ENCODE measurements at regions of chr2 and their contacts with region 1.

Region 1: DNA sequence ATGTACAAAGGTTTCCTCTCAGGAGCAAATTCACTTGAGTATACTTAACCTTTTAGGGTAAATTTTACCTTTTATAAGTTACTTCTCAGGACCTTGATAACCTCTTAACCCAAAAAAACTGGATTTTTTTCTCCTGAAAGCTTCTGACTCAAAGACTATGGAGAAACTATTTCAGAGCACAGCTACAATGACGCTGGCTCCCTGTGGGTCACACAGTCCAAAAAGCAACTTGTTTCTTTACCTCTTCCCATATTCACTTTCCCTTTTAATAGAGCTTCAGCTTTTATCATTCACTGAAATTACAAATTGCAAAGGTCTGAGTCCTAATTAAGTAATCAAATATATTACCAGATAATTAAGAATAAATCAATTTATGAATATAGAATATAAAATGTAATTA is 32.4 kb downstream of the GTF3C3 start:
- DNase-seq: no peak
- ATAC-seq: no peak
- H3K4me3 ChIP-seq: no peak overlapping the region
- H3K27ac ChIP-seq: no peak overlapping the region
- H3K4me1 ChIP-seq: no peaks in the 10 kb centered on the region
- H3K27me3 ChIP-seq: no peaks in the 10 kb centered on the region
- CTCF ChIP-seq: no peak
- POLR2A ChIP-seq: no peak
- RAD21 ChIP-seq: no peak

Region 2: GRCh38 chr2:196149948-196150347 is 617.2 kb before region 1 on chr2:
- CTCF ChIA-PET with region 1: no interaction called
- POLR2A ChIA-PET with region 1: no interaction called
- dilution Hi-C with region 1: no loop called
- in situ Hi-C with region 1: no loop called
- intact Hi-C with region 1: loop called (anchors 10 kb)
- DNase-seq: no peak
- ATAC-seq: no peak
- H3K4me3 ChIP-seq: no peak overlapping the region
- H3K27ac ChIP-seq: no peak overlapping the region
- H3K4me1 ChIP-seq: no peaks in the 10 kb centered on the region; the same call in 1 of the 2 replicates
- H3K27me3 ChIP-seq: no peaks in the 10 kb centered on the region
- CTCF ChIP-seq: no peak
- POLR2A ChIP-seq: no peak
- RAD21 ChIP-seq: no peak

Region 3: GRCh38 chr2:196468394-196468793 is 298.7 kb before region 1 on chr2:
- CTCF ChIA-PET with region 1: no interaction called
- POLR2A ChIA-PET with region 1: no interaction called
- dilution Hi-C with region 1: no loop called
- in situ Hi-C with region 1: no loop called
- intact Hi-C with region 1: loop called (anchors 10 kb)
- DNase-seq: no peak
- ATAC-seq: no peak
- H3K4me3 ChIP-seq: no peak overlapping the region
- H3K27ac ChIP-seq: no peak overlapping the region
- H3K4me1 ChIP-seq: no peaks in the 10 kb centered on the region
- H3K27me3 ChIP-seq: peaks cover 2% of the 10 kb centered on the region; the same call in 1 of the 2 replicates
- CTCF ChIP-seq: 0 out of 2 replicates have a peak, but pooled peaks have one; percentile 3
- POLR2A ChIP-seq: no peak
- RAD21 ChIP-seq: no peak

Region 4: DNA sequence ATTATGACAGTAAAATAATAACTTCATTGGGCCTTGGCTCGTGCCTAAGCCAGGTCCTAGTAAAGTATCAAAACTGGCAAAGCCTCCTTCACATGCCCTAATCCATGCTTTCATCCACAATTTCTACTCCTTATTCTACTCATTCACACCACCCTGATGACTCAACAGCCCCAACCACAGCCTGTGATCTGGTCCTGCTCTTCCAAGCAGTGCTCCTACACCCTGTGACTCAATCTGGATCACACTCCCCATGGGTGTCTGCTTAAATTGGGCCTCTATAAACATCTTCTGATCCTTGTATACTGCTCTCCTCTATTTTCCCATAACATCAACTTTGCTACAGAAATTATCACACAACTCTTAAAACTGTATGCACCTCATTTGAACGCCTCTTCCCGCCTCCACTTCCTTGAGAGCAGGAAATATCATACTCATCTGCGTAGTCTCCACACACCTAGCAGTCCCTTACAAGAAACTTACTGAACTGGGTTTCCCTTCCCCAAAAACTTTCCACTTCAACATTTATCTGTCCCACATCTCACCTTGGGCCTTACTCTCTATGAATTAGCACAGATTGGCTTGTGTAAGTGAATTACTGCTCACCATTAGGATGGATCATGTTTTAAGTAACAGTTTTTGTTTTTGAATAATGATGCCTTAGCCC is 16.5 kb after region 1 on chr2:
- CTCF ChIA-PET with region 1: no interaction called
- POLR2A ChIA-PET with region 1: no interaction called
- dilution Hi-C with region 1: no loop called
- in situ Hi-C with region 1: no loop called
- intact Hi-C with region 1: loop called (anchors 2 kb)
- DNase-seq: peak; percentile 69
- ATAC-seq: peak; percentile 88
- H3K4me3 ChIP-seq: no peak overlapping the region
- H3K27ac ChIP-seq: no peak overlapping the region
- H3K4me1 ChIP-seq: peaks cover 3% of the 10 kb centered on the region
- H3K27me3 ChIP-seq: no peaks in the 10 kb centered on the region
- CTCF ChIP-seq: no peak
- POLR2A ChIP-seq: no peak
- RAD21 ChIP-seq: no peak

Region 5: DNA sequence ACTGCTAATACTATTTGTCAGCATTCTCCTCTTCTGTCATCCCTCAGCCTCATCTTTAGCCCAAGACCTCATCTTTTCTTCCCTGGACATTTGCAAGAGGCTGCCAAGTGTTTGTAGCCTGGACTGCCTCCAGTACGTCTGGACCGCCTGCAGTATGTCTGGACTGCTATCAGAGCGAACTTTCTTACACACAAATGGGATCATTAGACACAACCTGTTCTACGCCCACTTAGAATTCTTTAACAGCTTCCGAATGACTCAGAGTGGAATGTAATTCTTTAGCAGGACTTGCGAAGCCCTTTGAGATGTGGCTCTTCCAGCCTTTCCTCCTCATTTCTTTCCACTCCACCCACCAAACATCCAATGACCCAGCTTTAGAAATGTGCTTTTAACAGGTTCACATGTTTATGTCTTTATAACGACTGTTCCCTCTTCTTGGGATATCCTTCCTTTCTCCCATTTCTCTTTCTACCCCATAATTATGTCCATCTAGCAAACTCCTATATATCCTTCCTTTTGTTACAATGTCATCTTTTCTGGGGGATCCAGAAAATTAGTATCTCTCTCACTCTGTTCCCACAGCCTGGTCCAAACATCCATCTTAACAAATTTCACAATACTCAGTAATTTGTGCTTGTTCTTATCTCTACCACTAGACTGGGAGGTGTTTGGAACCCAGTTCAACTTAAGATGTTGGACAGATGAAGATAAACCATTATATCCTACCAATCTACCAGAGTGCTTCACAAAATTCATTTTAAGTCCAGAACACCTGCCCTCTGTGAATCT is 330.7 kb after region 1 on chr2:
- CTCF ChIA-PET with region 1: no interaction called
- POLR2A ChIA-PET with region 1: no interaction called
- dilution Hi-C with region 1: no loop called
- in situ Hi-C with region 1: no loop called
- intact Hi-C with region 1: no loop called
- DNase-seq: peak; percentile 95
- ATAC-seq: peak; percentile 90
- H3K4me3 ChIP-seq: no peak overlapping the region
- H3K27ac ChIP-seq: no peak overlapping the region
- H3K4me1 ChIP-seq: peaks cover 1% of the 10 kb centered on the region; the same call in 1 of the 2 replicates
- H3K27me3 ChIP-seq: no peaks in the 10 kb centered on the region
- CTCF ChIP-seq: no peak
- POLR2A ChIP-seq: no peak
- RAD21 ChIP-seq: no peak